PC-9 (cell line): ENCODE measurements at regions of chrX and their contacts with region 1.

Region 1: DNA sequence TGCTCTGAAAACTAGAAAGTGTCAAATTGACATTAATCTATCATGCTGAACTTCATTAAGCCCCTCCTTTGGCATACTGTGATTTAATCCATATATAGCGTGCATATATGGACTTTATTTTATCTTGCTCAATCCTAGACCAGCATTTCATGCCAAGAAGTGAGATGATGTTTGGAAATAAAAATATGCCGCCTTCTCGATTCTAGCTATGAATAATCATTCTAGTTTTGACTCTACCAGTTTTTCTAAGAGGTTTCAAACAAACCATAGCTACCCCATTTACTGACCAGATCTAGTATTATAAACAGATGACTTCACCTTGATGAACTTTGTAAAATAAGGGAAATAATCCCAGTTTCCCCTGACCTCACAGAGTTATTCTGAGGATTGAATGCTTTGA is 95.0 kb downstream of the ARX start:
- DNase-seq: no peak
- H3K4me3 ChIP-seq: no peak overlapping the region
- H3K27ac ChIP-seq: no peak overlapping the region
- H3K4me1 ChIP-seq: no peaks in the 10 kb centered on the region
- H3K27me3 ChIP-seq: no peaks in the 10 kb centered on the region
- CTCF ChIP-seq: no peak

Region 2: DNA sequence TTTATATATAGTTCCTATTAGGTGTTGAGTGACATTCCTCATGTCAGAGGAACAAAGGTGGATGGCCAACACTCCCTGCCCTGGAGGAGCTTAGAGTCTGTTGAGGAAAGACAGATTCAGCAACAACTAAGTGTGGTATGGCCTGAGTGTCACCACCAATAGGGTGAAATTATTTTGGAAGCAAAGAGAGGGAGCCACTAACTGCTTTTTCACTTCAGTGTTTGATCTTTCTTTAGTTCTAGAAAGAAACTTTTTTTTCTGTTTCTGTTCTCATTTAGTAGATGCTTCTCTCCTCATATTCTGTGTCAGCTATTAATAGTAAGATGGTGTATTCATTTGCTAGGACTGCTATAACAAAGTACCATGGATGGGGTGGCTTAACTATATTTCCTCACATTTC is 13.5 kb after region 1 on chrX:
- CTCF ChIA-PET with region 1: no interaction called
- POLR2A ChIA-PET with region 1: interaction called, 7 read pairs
- intact Hi-C with region 1: loop called (anchors 1 kb)
- DNase-seq: no peak
- H3K4me3 ChIP-seq: no peak overlapping the region
- H3K27ac ChIP-seq: no peak overlapping the region
- H3K4me1 ChIP-seq: no peaks in the 10 kb centered on the region
- H3K27me3 ChIP-seq: no peaks in the 10 kb centered on the region
- CTCF ChIP-seq: no peak